ENCODE measurements at regions of chr11 and their contacts with region 1.

Region 1: GRCh38 chr11:123580557-123581275 is 73.7 kb downstream of the SCN3B start:
- DNase-seq: peak; percentile 89
- H3K4me3 ChIP-seq: no peak overlapping the region
- H3K27ac ChIP-seq: no peak overlapping the region
- H3K4me1 ChIP-seq: peaks cover 6 to 19% of the 10 kb centered on the region in 2 experiments; a peak in 2 of 4 replicates
- H3K27me3 ChIP-seq: no peaks in the 10 kb centered on the region
- CTCF ChIP-seq: peak; percentile 87
- EP300 ChIP-seq: no peak
- RAD21 ChIP-seq: peak; percentile 77

Region 2: DNA sequence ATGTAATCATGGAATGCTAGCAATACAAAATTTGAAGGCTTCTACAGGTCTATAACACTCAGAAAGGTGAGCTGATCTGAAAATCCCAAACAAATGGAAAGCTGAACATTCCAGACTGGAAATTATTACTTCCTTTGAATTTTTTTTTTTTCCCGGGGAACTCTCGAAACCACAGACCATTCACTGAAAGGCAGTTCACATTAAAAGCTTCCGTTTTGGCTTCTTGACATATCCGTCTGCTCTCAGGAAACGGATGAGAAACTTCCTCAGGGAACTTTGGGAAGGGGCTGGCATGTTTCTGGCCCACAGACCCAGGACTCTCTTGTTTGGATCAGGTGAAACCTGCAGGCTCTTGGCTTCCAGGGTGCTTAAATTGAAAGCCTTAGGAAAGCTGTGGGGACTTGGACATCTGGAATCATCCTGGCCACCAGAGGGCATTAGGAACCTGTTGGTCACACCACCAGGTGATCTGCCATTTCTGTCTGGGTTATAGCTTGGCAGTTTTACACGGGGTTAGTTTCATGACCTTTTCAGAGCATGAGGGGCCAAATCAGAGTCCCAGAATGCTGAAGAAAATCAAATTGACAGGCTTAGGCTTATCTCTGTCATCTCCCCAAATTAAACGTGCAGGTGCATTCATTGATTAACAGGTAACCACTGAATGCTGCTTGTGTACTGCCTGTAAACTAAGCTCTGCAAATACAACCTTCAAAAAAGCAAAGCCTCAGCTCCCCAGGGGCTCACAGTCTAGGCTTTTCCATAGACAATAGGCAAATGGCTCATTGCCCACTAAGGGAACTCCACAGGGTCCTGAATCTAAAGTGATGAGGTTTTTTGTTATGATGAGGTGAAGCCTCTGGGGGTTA is 173.4 kb before region 1 on chr11:
- CTCF ChIA-PET with region 1: interaction called, 13 read pairs
- POLR2A ChIA-PET with region 1: no interaction called
- DNase-seq: peak; percentile 57
- H3K4me3 ChIP-seq: no peak overlapping the region
- H3K27ac ChIP-seq: no peak overlapping the region
- H3K4me1 ChIP-seq: peaks cover 0 to 11% of the 10 kb centered on the region in 2 experiments; a peak in 2 of 4 replicates
- H3K27me3 ChIP-seq: no peaks in the 10 kb centered on the region
- CTCF ChIP-seq: peak; percentile 81
- EP300 ChIP-seq: no peak
- RAD21 ChIP-seq: peak; percentile 87

Region 3: DNA sequence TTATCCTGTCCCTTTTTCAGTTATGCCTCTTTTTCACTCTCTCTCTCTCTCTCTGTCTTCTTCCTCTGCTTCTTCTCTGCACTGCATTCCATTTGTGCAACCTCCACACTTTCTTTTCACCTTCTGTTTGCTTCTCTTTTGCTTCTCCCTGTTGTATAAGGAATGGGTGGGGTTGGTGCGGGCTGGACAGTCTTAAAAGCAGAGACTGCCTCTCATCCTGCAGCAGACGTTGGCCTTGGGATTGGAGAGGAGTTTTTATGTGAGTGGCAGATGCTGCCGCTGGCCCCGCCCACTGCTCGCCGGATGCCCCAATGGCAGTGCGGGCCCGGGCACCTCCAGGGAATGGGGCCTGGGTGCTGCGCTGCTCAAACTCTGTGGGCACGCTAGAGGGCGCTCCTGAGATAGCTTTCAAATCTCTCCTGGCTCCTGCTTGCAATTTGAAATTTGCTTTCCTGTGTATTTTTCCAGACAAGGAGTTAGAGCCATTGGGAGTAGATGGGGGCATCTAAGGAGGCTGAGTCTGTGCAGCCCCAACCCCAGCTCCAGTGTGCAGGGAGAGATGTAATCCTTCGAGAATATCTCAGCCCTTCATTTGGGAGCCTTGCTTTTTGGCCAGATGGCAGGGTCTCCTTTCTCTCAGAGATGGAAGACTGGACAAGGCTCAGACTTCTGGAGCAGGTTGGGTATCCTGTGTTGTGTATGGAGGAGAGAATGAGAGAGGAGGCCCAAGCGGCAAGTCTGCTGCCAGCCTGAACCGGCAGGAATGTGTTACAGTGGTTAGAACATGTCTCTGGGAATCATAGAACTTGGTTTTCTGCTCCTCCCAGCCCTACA is 69.5 kb before region 1 on chr11:
- CTCF ChIA-PET with region 1: interaction called, 50 read pairs
- POLR2A ChIA-PET with region 1: interaction called, 4 read pairs
- DNase-seq: peak; percentile 92
- H3K4me3 ChIP-seq: peak overlapping the region in 1 of 2 experiments; percentile 23; a peak in 2 of 4 replicates
- H3K27ac ChIP-seq: peak overlapping the region; percentile 44 to 68; a peak in 3 of 4 replicates
- H3K4me1 ChIP-seq: peaks cover 13 to 27% of the 10 kb centered on the region in 2 experiments; a peak in 3 of 4 replicates
- H3K27me3 ChIP-seq: no peaks in the 10 kb centered on the region
- CTCF ChIP-seq: peak; percentile 97
- EP300 ChIP-seq: no peak
- RAD21 ChIP-seq: peak; percentile 90

Region 4: DNA sequence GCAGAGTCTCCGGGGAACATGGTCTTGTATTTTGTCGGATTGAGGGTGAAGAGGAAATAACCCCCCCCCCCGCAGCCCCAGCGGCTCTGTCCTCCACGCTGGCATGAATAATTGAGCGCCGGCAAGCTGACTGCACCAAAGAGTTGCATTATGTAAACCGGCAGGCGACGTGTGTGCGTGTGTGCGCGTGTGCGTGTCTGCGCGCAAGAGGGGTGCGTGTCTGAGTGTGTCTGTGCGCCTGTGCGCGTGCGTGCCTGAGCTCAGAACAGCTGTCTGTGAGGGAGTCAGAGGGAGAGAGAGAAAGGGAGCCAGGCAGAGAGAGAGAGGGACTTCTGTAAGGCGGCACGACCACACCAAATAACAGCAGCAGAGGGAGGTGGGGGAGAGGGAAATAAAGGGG is 20.7 kb before region 1 on chr11:
- CTCF ChIA-PET with region 1: interaction called, 37 read pairs
- POLR2A ChIA-PET with region 1: interaction called, 3 read pairs
- DNase-seq: peak; percentile 72
- H3K4me3 ChIP-seq: peak overlapping the region in 1 of 2 experiments; percentile 19; a peak in 2 of 4 replicates
- H3K27ac ChIP-seq: peak overlapping the region; percentile 3 to 36; a peak in 3 of 4 replicates
- H3K4me1 ChIP-seq: peaks cover 7 to 24% of the 10 kb centered on the region in 2 experiments; a peak in 3 of 4 replicates
- H3K27me3 ChIP-seq: no peaks in the 10 kb centered on the region
- CTCF ChIP-seq: no peak
- EP300 ChIP-seq: no peak
- RAD21 ChIP-seq: no peak

Region 5: DNA sequence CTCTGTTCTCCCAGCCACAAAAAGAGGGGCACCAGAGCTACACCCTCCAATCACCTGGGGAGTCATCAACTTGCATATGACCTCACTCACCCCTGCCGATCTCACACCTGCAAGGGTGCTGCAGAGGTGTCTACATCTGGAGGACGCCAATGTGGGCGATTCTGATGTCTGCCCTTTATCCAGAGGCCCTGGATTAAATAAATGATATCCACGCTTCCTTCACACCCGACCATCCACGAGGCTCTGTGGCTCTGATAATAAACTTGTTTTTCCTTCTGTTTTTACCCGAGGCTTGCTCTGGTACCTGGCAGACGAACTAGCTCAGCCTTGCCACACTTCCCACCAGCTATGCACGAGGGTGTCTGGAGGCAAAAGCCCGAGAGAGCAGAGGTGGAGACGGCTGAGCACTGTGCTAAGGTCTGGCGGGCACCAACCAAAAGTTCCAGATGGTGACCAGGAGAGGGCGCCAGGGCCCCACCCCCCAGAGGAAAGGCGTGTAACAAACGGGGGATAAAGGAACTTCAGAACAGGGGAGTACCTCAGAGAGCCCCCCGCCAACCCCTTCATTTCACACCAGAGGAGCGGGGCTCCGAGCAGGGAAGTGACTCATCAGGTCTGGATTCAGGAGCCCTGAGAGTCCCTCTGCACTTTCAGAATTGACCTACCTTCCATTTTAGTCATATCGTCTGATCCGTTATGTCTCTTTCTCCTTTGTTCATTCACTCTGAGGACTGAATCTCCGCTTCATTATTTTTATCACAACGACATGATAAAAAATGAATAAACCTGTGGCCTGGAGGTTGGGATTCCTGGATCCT is 60.2 kb after region 1 on chr11:
- CTCF ChIA-PET with region 1: interaction called, 41 read pairs
- POLR2A ChIA-PET with region 1: no interaction called
- DNase-seq: peak; percentile 81
- H3K4me3 ChIP-seq: no peak overlapping the region
- H3K27ac ChIP-seq: no peak overlapping the region
- H3K4me1 ChIP-seq: peaks cover 0 to 8% of the 10 kb centered on the region in 2 experiments; a peak in 1 of 4 replicates
- H3K27me3 ChIP-seq: peaks cover 6% of the 10 kb centered on the region; the same call in 1 of the 2 replicates
- CTCF ChIP-seq: peak; percentile 85
- EP300 ChIP-seq: no peak
- RAD21 ChIP-seq: peak; percentile 92

Region 6: GRCh38 chr11:123707606-123708205 is 127.0 kb after region 1 on chr11:
- CTCF ChIA-PET with region 1: interaction called, 48 read pairs
- POLR2A ChIA-PET with region 1: no interaction called
- DNase-seq: peak; percentile 70
- H3K4me3 ChIP-seq: no peak overlapping the region
- H3K27ac ChIP-seq: no peak overlapping the region
- H3K4me1 ChIP-seq: peaks cover 0 to 2% of the 10 kb centered on the region in 2 experiments; a peak in 1 of 4 replicates
- H3K27me3 ChIP-seq: peaks cover 5% of the 10 kb centered on the region; the same call in 1 of the 2 replicates
- CTCF ChIP-seq: peak; percentile 91
- EP300 ChIP-seq: no peak
- RAD21 ChIP-seq: peak; percentile 99

Measured in SK-N-SH (cell line).